Activated T-helper 2 cell treated with anti-CD3 and anti-CD28 coated beads, Interferon-gamma antibody, Interleukin-2, Interleukin-4, amounts not matched to agents 10 μg/mL and 5 μg/mL and 100 μg/mL, durations not matched to agents 14 hours and 24 hours and 36 hours (primary cell): ENCODE measurements at regions of chr10 and their contacts with region 1.

Region 1: GRCh38 chr10:132536971-132537712 is 445 bp upstream of the INPP5A start:
- DNase-seq: peak; percentile 100
- H3K4me3 Mint-ChIP-seq: peak overlapping the region; percentile 61
- H3K27ac Mint-ChIP-seq: no peak overlapping the region
- H3K4me1 Mint-ChIP-seq: peaks cover 38% of the 10 kb centered on the region
- H3K27me3 Mint-ChIP-seq: peaks cover 10% of the 10 kb centered on the region

Region 2: GRCh38 chr10:132158122-132158741 is 378.9 kb before region 1 on chr10:
- intact Hi-C with region 1: loop called (anchors 1 kb)
- DNase-seq: peak; percentile 52
- H3K4me3 Mint-ChIP-seq: no peak overlapping the region
- H3K27ac Mint-ChIP-seq: peak overlapping the region; percentile 65
- H3K4me1 Mint-ChIP-seq: peaks cover 29% of the 10 kb centered on the region
- H3K27me3 Mint-ChIP-seq: no peaks in the 10 kb centered on the region

Region 3: DNA sequence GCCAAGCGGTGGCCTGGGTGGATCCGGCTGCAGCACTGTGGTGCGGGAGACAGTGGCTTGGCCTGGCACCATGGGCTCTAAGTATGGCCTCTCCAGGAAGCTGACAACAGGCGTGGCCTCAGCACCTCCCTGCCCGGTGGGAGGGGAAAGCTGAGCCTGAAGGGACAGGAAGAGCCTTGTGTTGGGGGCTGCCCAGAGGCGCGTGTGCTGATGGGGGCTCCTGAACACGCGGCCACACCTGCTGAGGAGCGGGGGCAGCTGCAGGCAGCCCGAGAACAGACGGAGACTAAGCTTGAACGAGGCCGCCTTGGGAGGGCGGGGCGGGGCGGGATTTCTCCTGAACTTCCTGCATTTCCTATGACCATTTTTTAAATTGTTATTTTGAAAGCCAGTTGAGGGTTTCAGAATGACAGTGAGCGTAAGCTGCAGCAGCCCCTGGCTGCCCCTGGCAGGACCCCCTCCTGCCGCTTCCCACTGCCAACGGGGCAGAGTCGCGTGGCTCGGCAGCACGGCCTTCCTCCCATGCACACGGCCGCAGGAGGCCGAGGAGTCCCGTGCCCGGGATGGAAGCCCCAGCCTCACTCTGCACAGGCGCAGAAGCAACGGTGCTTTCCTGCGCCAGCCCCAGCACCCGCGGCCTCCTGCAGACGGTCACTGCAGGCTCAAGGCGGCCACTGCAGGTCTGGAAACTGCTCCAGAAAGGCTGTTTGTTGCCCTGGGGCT is 307.1 kb before region 1 on chr10:
- intact Hi-C with region 1: loop called (anchors 5 kb)
- DNase-seq: peak; percentile 41
- H3K4me3 Mint-ChIP-seq: peak overlapping the region; percentile 66
- H3K27ac Mint-ChIP-seq: peak overlapping the region; percentile 89
- H3K4me1 Mint-ChIP-seq: peaks cover 24% of the 10 kb centered on the region
- H3K27me3 Mint-ChIP-seq: no peaks in the 10 kb centered on the region

Region 4: GRCh38 chr10:132331526-132332432 is 205.4 kb before region 1 on chr10 and contains the start of gene LRRC27:
- intact Hi-C with region 1: loop called (anchors 10 kb)
- DNase-seq: peak; percentile 99
- H3K4me3 Mint-ChIP-seq: peak within 1 kb of the TSS; percentile 83
- H3K27ac Mint-ChIP-seq: peak within 1 kb of the TSS; percentile 91
- H3K4me1 Mint-ChIP-seq: peaks cover 49% of the 10 kb centered on the region
- H3K27me3 Mint-ChIP-seq: no peaks in the 10 kb centered on the region
- total RNA-seq, gene LRRC27: 2.8 and 3.5 TPM in 2 replicates

Region 5: GRCh38 chr10:132554991-132555647 is 18.0 kb after region 1 on chr10:
- intact Hi-C with region 1: loop called (anchors 2 kb)
- DNase-seq: peak; percentile 50
- H3K4me3 Mint-ChIP-seq: no peak overlapping the region
- H3K27ac Mint-ChIP-seq: no peak overlapping the region
- H3K4me1 Mint-ChIP-seq: peaks cover 34% of the 10 kb centered on the region
- H3K27me3 Mint-ChIP-seq: no peaks in the 10 kb centered on the region

Region 6: GRCh38 chr10:132588301-132589013 is 51.3 kb after region 1 on chr10:
- intact Hi-C with region 1: loop called (anchors 2 kb)
- DNase-seq: peak; percentile 28
- H3K4me3 Mint-ChIP-seq: no peak overlapping the region
- H3K27ac Mint-ChIP-seq: peak overlapping the region; percentile 38
- H3K4me1 Mint-ChIP-seq: peaks cover 32% of the 10 kb centered on the region
- H3K27me3 Mint-ChIP-seq: no peaks in the 10 kb centered on the region

Region 7: GRCh38 chr10:133309111-133309719 is 772.1 kb after region 1 on chr10:
- intact Hi-C with region 1: loop called (anchors 5 kb)
- DNase-seq: peak; percentile 87
- H3K4me3 Mint-ChIP-seq: peak overlapping the region; percentile 63
- H3K27ac Mint-ChIP-seq: peak overlapping the region; percentile 76
- H3K4me1 Mint-ChIP-seq: peaks cover 16% of the 10 kb centered on the region
- H3K27me3 Mint-ChIP-seq: no peaks in the 10 kb centered on the region